ENCODE measurements at regions of chr5 and their contacts with region 1.

Region 1: GRCh38 chr5:172800088-172800551 is 29.1 kb upstream of the DUSP1 start:
- DNase-seq: peak; percentile 93
- H3K4me3 ChIP-seq: no peak overlapping the region
- H3K27ac ChIP-seq: peak overlapping the region; percentile 96
- H3K4me1 ChIP-seq: peaks cover 48% of the 10 kb centered on the region
- H3K27me3 ChIP-seq: no peaks in the 10 kb centered on the region
- CTCF ChIP-seq: no peak

Region 2: DNA sequence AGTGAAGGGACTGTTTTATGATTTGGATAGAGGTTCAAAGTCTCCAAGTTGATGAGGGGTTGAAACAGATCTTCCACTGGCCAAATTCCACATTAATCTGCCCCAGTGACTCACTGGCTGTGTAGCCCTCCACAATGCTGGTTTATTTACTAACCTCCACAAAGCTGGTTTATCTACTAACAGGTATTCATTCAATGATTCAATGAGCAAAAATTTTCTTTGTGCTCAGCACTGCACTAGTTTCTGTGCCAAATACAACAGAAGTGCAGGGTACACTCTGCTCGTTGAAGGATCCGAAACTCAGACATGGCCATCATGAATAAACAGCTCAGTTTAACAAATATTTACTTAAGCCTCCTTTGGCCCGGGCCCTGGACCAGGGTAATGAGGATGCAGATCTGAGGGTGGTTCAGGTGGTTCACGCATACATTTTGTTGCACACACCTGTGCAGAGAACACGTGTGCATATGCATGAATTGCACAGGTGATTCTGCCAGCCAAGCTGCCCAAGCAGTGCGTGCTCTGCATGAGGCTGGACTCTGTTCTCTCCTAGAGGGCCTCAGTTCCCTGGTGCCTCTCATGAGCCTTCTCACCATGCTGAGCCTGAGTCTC is 416.8 kb before region 1 on chr5:
- CTCF ChIA-PET with region 1: no interaction called
- dilution Hi-C with region 1: no loop called
- in situ Hi-C with region 1: no loop called
- intact Hi-C with region 1: no loop called
- DNase-seq: peak; percentile 79
- H3K4me3 ChIP-seq: no peak overlapping the region
- H3K27ac ChIP-seq: no peak overlapping the region
- H3K4me1 ChIP-seq: peaks cover 14% of the 10 kb centered on the region
- H3K27me3 ChIP-seq: no peaks in the 10 kb centered on the region
- CTCF ChIP-seq: no peak

Region 3: DNA sequence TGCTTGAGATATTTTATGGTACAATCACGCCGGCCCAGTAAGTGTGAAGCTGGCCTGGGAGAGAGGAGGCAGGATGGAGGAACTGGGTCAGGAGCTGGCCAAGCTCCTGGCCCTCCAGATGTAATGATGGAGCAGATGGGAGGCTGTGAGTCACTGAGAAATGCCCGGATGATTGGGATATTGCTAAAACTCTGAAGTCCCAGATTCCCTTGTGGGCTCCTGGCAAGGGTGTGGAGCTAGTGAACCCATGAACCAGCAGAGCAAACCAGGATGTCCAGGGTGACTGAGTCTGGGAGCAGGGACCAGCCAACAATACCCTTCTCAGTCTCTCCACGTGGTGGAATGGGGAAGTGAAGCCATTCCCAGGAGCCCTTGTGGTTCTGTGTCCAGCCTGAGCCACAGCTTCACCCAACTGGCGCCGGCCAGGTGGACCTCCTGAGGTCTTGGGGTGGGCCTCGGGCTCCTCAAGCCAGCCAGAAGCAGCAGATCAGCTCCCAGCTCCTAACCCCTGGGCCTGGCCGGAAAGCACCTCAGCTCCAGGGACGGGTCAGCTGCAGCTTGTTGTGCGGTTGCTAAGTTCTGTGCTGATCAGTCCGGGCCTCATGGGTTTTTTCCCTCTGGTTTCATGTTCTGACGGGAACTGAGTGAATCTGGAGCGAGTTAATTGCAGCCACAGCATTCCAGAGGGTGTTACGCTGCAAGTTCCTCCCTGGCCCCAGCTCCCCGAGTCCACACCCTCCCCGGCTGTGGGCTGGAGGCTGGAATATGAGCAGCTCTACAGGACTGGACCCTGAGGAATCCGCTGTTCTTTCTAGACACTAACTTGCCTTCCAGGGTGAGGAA is 66.8 kb before region 1 on chr5:
- CTCF ChIA-PET with region 1: no interaction called
- dilution Hi-C with region 1: no loop called
- in situ Hi-C with region 1: no loop called
- intact Hi-C with region 1: loop called (anchors 2 kb)
- DNase-seq: peak; percentile 100
- H3K4me3 ChIP-seq: no peak overlapping the region
- H3K27ac ChIP-seq: peak overlapping the region; percentile 100
- H3K4me1 ChIP-seq: peaks cover 31% of the 10 kb centered on the region
- H3K27me3 ChIP-seq: no peaks in the 10 kb centered on the region
- CTCF ChIP-seq: no peak

Region 4: DNA sequence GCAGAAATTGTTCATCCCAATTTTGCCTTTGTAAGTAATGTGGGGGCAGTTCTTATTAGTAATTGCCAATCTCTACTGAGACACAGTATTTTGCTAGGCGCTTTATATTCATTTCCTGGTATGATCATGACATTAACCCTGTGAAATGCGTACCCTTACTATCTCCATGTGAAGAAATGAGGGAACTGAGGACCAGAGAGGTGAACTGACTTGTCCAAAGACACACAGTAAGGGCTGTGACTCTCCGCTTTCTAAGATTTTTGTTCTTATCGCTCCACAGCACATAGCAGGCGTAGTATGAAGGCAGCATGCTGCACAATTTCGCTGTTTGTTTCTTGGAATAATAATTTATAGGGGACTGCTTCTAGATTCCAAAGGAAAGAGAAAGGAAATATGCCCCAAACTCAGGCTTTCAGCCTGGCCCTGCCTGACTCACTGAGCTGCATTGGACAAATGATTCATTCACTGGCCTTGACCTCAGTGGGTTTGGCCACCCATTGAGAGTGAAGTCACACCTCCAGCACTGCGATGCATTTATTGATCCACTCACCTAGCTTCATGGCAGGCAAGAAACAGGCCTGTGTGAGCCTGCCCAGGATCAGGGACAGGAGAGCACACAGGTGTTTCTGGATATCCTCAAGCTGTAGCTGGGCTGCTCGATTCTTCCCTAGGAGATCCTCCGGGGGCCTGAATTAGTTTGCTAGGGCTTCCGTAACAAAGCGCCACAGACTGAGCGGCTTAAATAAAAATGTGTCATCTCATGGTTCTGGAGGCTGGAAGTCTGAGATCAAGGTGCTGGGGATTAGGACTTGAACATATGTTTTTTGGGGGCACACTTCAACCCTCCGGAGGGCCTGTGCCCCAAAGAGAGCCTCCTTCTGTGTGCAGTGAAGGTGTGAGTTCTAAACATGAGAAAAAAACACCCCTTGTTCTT is 22.0 kb before region 1 on chr5:
- CTCF ChIA-PET with region 1: no interaction called
- dilution Hi-C with region 1: no loop called
- in situ Hi-C with region 1: no loop called
- intact Hi-C with region 1: loop called (anchors 1 kb)
- DNase-seq: peak; percentile 97
- H3K4me3 ChIP-seq: no peak overlapping the region
- H3K27ac ChIP-seq: peak overlapping the region; percentile 97
- H3K4me1 ChIP-seq: peaks cover 42% of the 10 kb centered on the region
- H3K27me3 ChIP-seq: no peaks in the 10 kb centered on the region
- CTCF ChIP-seq: no peak

Region 5: DNA sequence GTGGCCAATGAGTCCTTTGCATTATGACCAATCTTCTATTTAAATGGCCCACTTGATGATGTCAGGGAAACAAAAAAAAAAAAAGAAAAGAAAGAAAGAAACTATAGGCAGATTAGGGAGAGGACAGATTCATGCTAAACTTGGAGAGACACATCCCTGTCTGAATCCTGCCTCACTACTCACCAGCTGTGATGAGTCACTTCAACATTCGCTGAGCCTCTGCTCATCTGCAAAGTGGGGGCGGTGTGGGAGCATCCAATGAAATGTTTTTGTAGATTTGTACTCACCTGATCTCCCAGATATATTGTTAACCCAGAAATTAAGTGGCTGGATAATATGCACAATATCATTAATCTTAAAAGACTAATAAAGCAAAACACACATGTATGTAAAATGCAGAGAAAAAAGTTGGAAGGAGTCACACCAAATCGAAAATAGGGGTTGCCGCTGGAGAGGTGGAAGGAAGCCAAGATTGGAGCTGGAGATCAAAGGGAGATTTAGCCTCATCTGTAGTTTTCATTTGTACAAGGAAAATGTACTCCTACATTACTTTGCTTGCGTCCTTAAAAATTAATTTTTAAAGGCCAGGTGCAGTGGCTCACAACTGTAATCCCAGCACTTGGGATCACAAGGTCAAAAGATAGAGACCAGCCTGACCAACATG is 16.9 kb after region 1 on chr5:
- CTCF ChIA-PET with region 1: no interaction called
- dilution Hi-C with region 1: no loop called
- in situ Hi-C with region 1: no loop called
- intact Hi-C with region 1: loop called (anchors 1 kb)
- DNase-seq: peak; percentile 86
- H3K4me3 ChIP-seq: no peak overlapping the region
- H3K27ac ChIP-seq: peak overlapping the region; percentile 50
- H3K4me1 ChIP-seq: peaks cover 27% of the 10 kb centered on the region
- H3K27me3 ChIP-seq: no peaks in the 10 kb centered on the region
- CTCF ChIP-seq: no peak

Region 6: DNA sequence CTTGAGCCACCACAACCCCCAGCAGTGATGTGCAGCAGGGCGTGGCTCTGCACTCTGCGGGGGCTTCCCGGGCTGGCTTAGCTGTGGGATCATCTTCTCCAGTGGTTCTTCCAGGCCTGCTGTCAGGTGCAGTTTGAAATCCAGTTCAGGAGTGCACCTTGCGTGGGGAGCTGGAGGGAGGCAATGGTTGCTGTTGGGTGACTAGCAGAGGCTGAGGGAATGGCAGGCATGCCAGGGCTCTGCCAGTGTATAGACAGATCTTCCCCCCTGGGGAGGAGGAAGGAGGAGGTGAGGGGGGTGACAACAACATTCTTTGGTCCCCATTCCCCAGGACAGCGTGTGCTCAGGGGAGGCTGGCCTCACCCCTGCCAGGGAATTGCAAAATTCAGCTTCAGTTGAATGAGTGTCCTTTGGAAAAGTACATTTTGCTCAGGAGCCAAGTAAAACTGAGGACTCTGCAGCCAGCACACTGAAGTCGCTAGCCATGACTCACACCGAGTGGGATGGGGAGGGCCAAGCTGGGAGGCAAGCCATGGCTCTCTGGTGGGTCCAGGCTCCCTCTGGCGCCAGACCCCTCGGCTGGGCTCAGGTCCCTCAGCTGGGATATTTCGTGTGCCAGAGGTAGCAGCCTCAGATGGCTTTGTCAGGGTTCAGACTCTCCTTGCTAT is 68.9 kb after region 1 on chr5:
- CTCF ChIA-PET with region 1: no interaction called
- dilution Hi-C with region 1: loop called (anchors 5 kb)
- in situ Hi-C with region 1: no loop called
- intact Hi-C with region 1: loop called (anchors 1 kb)
- DNase-seq: peak; percentile 76
- H3K4me3 ChIP-seq: no peak overlapping the region
- H3K27ac ChIP-seq: peak overlapping the region; percentile 86
- H3K4me1 ChIP-seq: peaks cover 58% of the 10 kb centered on the region
- H3K27me3 ChIP-seq: no peaks in the 10 kb centered on the region
- CTCF ChIP-seq: peak in 1 of 2 donors; percentile 35

Region 7: DNA sequence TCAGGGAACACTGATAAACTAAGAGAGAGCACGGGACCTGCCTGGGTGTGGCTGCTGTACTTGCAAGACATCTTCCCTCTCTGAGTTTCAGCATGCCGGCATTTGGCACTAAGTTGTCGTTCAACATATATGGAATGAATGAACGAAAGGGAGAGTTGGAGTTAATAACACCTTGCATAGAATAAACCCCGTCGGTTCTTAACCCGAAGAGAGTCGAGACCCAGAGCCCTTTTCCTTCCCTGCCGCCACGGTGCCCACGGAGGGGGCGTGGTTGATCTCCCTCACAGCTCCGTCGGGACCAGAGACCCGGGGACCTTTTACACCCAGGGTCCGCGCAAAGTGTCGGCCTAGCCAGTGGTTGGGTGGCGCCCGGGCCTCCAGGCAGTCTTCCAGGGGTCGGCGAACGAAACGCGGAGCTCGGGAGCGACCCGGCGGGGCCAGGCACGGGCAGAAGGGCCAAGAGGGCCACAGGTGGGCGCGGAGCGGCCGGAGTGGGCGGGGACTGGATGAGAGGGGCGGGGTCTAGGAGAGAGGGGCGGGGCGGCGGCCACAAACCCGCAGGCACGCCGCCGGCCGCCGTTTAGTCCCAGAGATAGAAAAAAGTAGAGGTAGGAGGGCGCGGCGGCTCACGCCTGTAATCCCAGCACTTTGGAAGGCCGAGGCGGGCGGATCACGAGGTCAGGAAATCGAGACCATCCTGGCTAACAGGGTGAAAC is 158.4 kb after region 1 on chr5:
- CTCF ChIA-PET with region 1: no interaction called
- dilution Hi-C with region 1: no loop called
- in situ Hi-C with region 1: no loop called
- intact Hi-C with region 1: loop called (anchors 1 kb)
- DNase-seq: peak; percentile 37
- H3K4me3 ChIP-seq: peak overlapping the region; percentile 75 to 100 (median 98)
- H3K27ac ChIP-seq: peak overlapping the region; percentile 86
- H3K4me1 ChIP-seq: peaks cover 22% of the 10 kb centered on the region
- H3K27me3 ChIP-seq: no peaks in the 10 kb centered on the region
- CTCF ChIP-seq: no peak